BJ (cell line): ENCODE measurements at regions of chr19 and their contacts with region 1.

Region 1: GRCh38 chr19:55385353-55385739 is 386 bp upstream of the RPL28 start:
- DNase-seq: peak; percentile 80
- H3K4me3 ChIP-seq: peak overlapping the region; percentile 94
- H3K27me3 ChIP-seq: no peaks in the 10 kb centered on the region
- CTCF ChIP-seq: no peak

Region 2: GRCh38 chr19:55062734-55063492 is 322.4 kb before region 1 on chr19 and contains the start of gene RDH13:
- CTCF ChIA-PET with region 1: no interaction called
- POLR2A ChIA-PET with region 1: no interaction called
- DNase-seq: peak; percentile 62
- H3K4me3 ChIP-seq: peak within 1 kb of the TSS; percentile 86
- H3K27me3 ChIP-seq: peaks cover 5% of the 10 kb centered on the region; the same call in 1 of the 2 replicates
- CTCF ChIP-seq: no peak
- polyA plus RNA-seq, gene RDH13: 5.2 and 6.1 TPM in 2 replicates

Region 3: GRCh38 chr19:55289117-55289796 is 96.1 kb before region 1 on chr19:
- CTCF ChIA-PET with region 1: interaction called, 25 read pairs
- POLR2A ChIA-PET with region 1: no interaction called
- DNase-seq: no peak
- H3K4me3 ChIP-seq: no peak overlapping the region
- H3K27me3 ChIP-seq: no peaks in the 10 kb centered on the region
- CTCF ChIP-seq: no peak